Activated CD4-positive, alpha-beta T cell treated with anti-CD3 and anti-CD28 coated beads for 36 hours (primary cell): ENCODE measurements at regions of chr12 and their contacts with region 1.

Region 1: GRCh38 chr12:6688999-6689882 is at the start of gene ZNF384:
- DNase-seq: peak; percentile 96
- ATAC-seq: peak; percentile 84
- H3K4me3 Mint-ChIP-seq: peak within 1 kb of the TSS; percentile 86
- H3K27ac Mint-ChIP-seq: peak within 1 kb of the TSS; percentile 92
- H3K4me1 Mint-ChIP-seq: peaks cover 41% of the 10 kb centered on the region
- H3K27me3 Mint-ChIP-seq: no peaks in the 10 kb centered on the region
- total RNA-seq, gene ZNF384: 61.4 to 79.0 TPM

Region 2: DNA sequence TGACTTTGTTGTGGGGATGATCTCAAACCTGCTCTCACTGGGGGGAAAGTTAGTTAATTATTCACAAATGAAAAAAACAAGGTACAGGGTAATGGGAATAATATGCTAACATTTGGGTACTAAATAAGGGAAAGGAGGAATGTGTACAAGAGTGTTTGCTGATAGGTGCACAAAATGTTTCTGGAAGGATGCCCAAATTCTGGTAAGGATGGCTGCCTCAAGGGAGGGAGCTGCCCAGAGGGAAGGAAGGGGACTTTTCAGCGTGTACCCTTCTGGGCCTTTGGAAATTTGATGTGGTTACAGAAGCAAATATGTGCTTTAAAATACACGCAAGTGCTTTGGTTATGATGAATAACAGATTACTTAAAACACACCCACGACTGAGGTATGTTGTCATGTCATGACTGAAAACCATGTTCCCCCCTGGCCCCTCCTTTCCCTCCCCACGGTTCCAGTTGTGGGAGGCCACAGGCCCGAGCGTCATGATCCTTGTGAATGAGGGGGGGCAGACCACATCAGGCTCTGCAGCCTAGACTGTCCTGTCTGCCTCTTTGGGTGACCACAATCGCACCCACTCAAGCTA is 422.0 kb before region 1 on chr12:
- CTCF ChIA-PET with region 1: no interaction called
- POLR2A ChIA-PET with region 1: no interaction called
- intact Hi-C with region 1: no loop called
- DNase-seq: peak; percentile 84
- ATAC-seq: peak; percentile 87
- H3K4me3 Mint-ChIP-seq: no peak overlapping the region
- H3K27ac Mint-ChIP-seq: peak overlapping the region; percentile 55
- H3K4me1 Mint-ChIP-seq: peaks cover 16% of the 10 kb centered on the region
- H3K27me3 Mint-ChIP-seq: peaks cover 2% of the 10 kb centered on the region

Region 3: DNA sequence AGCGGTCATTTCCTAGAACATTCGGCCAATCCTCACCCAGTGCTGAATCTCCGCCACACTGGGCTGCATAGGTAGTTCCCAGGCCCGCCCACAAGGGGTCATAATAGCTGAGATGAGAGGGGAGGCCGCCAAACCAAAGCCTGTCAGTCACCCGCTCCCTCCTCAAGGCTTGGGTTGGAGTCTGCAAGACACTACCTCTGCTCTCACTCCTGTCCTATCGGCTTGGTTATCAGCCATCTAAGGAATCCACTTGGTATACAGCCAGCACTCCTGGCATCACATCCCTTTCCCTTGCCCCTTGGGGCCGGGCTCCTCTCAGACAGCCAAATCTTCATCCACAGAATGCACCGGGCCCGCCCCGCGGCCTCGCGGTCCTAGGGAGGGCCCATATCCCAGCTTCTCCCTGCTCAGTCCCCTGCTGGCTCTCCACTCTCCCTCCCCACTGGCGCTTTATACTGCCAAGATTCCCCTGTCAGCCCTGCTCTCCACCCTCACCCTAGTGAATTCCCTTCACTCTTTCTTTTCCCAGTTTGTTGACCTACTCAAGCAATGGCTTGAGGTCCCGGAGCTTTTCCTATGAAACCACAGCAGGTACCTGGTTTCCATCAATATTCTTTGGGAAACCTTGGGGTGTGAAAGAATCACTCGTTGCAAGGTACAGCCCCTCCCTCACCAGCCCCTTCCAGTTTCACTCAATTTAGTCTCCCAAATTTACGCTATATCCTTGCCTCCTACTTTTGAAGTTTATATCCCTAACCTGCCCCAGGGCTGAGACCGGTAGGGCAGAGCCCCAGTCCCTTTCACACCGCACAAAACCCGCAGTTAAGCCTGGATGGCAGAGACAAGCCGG is 134.8 kb before region 1 on chr12:
- CTCF ChIA-PET with region 1: interaction called, 5 read pairs
- POLR2A ChIA-PET with region 1: no interaction called
- intact Hi-C with region 1: loop called in 1 of 2 experiments (anchors 2 kb)
- DNase-seq: peak; percentile 88
- ATAC-seq: peak; percentile 68
- H3K4me3 Mint-ChIP-seq: peak overlapping the region; percentile 91
- H3K27ac Mint-ChIP-seq: peak overlapping the region; percentile 76
- H3K4me1 Mint-ChIP-seq: peaks cover 54% of the 10 kb centered on the region
- H3K27me3 Mint-ChIP-seq: no peaks in the 10 kb centered on the region

Region 4: DNA sequence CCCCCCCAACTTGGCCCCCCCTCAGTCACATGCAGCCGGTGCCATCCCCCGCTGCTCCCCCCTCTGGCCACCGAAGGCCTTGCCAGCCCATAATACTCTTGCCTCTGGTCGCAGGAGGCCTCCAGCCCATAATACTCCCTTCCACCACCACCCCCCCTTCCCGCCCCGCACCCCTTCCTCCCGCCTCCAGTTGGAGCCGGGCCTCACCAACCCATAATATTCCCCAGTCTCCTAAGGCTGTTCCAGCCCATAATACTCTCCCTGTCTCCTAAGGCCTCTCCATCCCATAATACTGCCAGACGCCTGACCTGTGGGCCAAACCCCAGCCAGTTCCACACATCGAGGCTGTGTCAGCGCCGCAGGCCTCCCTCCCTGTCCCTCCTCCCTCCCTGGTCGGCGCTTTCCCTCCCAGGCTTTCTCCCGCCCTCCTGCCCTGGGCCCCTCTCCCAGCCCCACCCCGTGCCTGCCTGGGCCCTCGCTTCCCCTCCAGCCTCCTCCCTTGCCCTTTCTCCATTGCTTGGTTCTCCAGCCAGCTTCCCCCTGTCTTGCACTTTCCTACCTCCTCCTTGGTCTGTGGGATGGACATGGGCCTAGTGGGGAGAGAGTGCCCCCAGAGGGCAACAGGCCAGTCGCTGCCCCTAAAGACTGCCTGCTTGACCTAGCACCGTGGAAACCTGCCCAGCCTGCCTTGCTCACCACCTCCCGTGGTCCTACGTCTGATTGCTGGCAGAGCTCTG is 75.3 kb before region 1 on chr12:
- CTCF ChIA-PET with region 1: interaction called, 20 read pairs
- POLR2A ChIA-PET with region 1: no interaction called
- intact Hi-C with region 1: loop called (anchors 1 kb)
- DNase-seq: peak; percentile 51
- ATAC-seq: peak; percentile 30
- H3K4me3 Mint-ChIP-seq: no peak overlapping the region
- H3K27ac Mint-ChIP-seq: peak overlapping the region; percentile 10
- H3K4me1 Mint-ChIP-seq: peaks cover 41% of the 10 kb centered on the region
- H3K27me3 Mint-ChIP-seq: no peaks in the 10 kb centered on the region

Region 5: DNA sequence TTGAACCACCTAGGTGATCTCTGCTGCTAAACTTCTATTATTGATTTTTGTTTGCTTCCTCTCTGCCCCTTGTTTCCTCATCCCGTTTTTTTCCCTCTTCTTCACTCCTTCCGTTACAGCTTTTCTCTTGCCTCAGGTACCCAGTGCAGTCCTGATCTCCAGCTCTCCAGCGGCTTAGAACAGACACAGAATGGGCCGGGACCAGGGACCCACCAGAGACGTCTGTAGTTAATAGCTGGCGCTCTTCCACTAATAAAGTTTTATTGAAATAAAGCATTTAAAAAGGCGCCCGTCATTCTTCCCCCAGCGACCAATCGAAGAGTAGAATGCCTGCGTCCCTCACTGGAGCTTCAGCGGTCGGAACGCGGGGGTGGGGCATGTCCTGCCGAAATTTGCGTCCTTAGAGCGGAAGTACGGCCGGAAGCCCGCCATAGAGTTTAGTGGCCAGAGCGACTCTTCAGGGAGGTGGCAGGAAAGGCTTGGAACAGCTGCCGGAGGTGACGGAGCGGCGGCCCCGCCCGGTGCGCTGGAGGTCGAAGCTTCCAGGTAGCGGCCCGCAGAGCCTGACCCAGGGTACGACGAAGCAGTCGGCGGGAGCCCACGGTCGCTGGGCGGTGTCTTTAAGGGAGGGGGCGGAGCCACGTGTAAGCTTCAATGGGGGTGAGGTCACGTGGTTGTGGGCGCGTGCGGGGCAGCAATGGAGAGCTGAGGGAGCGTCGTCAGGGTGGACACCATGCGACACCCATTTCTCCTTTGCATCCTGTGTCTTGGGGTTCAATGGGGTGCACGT is 34.6 kb after region 1 on chr12 and contains the start of gene COPS7A:
- CTCF ChIA-PET with region 1: interaction called, 11 read pairs
- POLR2A ChIA-PET with region 1: interaction called, 18 read pairs
- intact Hi-C with region 1: loop called (anchors 1 kb)
- DNase-seq: peak; percentile 98
- ATAC-seq: peak; percentile 96
- H3K4me3 Mint-ChIP-seq: peak within 1 kb of the TSS; percentile 80
- H3K27ac Mint-ChIP-seq: peak within 1 kb of the TSS; percentile 97
- H3K4me1 Mint-ChIP-seq: peaks cover 18% of the 10 kb centered on the region
- H3K27me3 Mint-ChIP-seq: no peaks in the 10 kb centered on the region
- total RNA-seq, gene COPS7A: 38.3 to 41.6 TPM

Region 6: DNA sequence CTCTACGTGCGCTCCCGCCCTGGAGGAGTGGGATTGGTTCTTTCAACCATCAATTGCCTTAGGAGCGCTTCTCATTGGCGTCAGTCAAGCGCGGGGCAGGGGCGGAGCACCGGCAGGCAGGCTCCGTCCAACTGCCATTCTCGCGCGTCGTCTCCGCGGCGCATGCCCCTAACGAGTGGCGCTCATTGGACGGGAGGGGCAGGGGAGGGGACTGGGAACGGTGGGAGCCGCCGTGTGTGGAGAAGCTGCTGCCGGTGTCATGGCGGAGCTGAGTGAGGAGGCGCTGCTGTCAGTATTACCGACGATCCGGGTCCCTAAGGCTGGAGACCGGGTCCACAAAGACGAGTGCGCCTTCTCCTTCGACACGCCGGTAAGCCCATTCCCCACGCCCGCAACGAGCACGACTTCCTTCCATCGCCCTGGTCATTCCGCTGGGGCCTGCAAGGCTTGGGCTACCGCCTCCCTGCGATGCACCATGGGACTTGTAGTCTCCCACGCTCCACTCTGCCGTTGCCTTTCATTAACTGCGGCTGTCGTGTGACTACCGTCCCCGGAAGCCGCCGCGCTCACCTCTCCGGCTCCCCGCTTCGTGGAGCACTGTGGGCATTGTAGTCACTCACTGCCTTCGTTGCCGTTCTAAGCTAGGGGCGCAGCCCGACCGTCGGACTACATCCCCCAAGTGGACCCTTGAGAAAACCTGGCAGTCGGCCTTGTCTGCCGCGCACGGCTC is 162.8 kb after region 1 on chr12 and contains the start of gene USP5:
- CTCF ChIA-PET with region 1: interaction called, 6 read pairs
- POLR2A ChIA-PET with region 1: interaction called, 27 read pairs
- intact Hi-C with region 1: loop called (anchors 1 kb)
- DNase-seq: peak; percentile 99
- ATAC-seq: peak; percentile 80
- H3K4me3 Mint-ChIP-seq: peak within 1 kb of the TSS; percentile 93
- H3K27ac Mint-ChIP-seq: peak within 1 kb of the TSS; percentile 99
- H3K4me1 Mint-ChIP-seq: peaks cover 21% of the 10 kb centered on the region
- H3K27me3 Mint-ChIP-seq: no peaks in the 10 kb centered on the region
- total RNA-seq, gene USP5: 128 to 132 TPM

Region 7: DNA sequence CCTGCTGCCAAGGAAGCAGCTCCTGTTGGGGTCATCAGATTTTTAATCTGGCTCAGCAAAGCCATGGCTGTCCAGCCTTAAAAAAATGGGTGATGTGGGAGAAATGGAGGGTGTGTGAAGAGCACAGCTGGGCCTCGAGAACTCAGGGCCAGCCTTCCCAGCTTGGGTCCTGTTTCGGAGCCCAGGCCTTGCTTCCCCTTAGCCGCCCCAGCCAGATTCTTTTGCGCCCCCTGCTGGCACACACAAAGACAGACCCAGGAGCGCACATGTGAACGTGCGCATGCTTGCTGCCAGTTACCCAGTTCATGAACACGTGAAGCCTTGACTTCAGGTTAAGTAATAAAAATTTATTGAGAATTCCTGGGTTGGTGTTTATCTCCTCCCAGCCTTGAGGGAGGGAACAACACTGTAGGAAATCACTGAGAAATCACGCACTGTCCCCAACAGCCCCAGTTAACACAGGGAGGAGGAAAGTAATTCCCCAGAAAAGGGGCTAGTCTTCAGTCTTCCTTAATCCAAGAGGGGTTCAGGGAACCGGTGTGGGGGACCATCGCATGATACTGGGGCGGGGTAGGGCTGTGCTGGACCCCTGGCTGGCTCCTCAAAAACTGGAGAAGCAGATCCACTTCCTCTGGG is 275.9 kb after region 1 on chr12:
- CTCF ChIA-PET with region 1: no interaction called
- POLR2A ChIA-PET with region 1: no interaction called
- intact Hi-C with region 1: loop called in 1 of 2 experiments (anchors 1 kb)
- DNase-seq: peak; percentile 95
- ATAC-seq: peak; percentile 48
- H3K4me3 Mint-ChIP-seq: no peak overlapping the region
- H3K27ac Mint-ChIP-seq: peak overlapping the region; percentile 94
- H3K4me1 Mint-ChIP-seq: peaks cover 76% of the 10 kb centered on the region
- H3K27me3 Mint-ChIP-seq: no peaks in the 10 kb centered on the region